ENCODE measurements at regions of chr15 and their contacts with region 1.

Region 1: DNA sequence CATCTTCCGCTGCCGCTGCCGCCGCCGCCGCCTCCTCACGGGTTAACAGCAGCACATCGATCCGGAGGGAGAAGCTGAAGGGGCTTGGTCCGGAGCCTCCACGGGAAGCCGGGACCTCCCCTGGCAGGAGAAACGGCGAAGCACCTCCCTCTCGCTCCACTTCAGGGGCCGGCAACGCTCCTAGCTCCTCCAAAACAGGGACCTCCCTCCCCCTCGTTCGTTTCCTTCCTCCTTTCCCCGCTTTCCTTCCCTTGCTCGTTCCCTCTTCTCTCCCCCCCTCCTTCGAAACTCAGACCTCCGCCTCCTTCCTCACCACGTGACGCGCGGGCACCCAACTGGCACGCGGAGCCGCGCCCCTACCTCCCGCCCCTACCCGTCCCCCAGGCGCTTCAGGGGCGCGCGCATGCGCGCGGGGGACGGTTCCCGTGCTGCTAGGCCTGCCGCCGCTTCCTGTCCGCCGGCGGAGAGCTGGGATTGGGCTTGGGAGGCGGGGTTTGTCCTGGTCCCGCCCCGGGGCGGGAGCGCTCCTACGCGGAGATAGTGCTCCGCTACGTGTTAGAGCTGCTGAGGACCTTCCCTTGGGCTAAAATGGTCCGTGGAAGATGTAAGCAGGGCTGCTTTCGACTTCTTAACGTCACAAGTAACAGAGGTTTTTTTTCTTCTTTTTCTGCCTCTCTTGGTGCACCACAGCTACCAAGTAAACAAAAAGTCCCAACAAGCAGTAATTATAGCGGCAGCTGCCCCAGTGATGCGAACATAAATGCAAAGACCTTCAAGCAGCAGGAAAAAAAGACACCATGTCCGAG is at the start of gene ADAM10:
- DNase-seq: peak; percentile 99
- H3K4me3 Mint-ChIP-seq: peak within 1 kb of the TSS; percentile 92
- H3K27ac Mint-ChIP-seq: peak within 1 kb of the TSS; percentile 92
- H3K4me1 Mint-ChIP-seq: peaks cover 31% of the 10 kb centered on the region
- H3K27me3 Mint-ChIP-seq: no peaks in the 10 kb centered on the region
- total RNA-seq, gene ADAM10: 103 and 111 TPM in 2 replicates

Region 2: DNA sequence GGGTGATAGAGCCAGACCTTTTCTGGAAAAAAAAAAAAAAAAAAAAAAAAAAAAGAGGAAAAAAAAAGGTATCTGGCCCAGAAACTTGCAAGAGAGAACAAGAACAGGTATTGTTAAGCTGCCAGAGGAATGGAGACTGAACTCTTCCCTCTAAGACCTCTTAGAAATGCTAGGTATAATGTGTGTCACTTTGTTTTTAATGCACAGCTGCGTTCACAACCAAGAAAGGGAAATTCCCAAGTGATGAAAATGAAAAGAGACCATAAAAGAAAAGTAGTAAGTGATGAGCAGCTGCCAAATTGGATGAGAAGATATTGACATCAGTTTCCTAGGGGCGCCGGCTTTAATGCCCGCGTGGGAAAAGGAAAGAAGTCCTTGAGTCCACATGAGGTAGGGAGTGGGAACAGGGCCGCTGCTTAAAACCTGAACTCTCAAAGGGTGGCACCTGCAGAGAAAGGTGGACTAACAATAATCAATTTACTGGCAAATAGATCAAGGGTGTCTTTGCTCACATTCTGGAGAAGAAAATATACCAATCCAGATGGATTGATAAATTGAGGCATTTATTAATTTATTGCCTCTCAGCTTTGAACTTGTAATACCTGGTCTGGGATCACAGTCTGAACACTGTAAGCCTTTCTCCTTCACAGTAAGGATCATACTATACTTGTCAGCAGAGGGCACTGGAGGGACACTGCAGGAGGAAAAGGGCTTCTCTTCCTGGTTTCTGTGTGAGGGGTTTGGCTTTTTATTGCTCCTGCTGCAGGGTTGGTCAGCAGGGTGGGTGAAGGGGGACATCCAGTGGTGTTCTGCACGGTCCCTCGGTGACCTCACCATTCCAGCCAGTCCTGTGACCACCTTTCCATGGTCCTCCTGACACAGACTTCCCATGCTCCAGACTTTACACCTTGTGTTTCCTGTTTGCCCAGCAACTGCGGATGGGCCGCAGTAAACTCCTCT is 480.0 kb before region 1 on chr15:
- intact Hi-C with region 1: loop called (anchors 5 kb)
- DNase-seq: peak; percentile 83
- H3K4me3 Mint-ChIP-seq: peak overlapping the region; percentile 15
- H3K27ac Mint-ChIP-seq: peak overlapping the region; percentile 63
- H3K4me1 Mint-ChIP-seq: peaks cover 14% of the 10 kb centered on the region
- H3K27me3 Mint-ChIP-seq: no peaks in the 10 kb centered on the region

Region 3: DNA sequence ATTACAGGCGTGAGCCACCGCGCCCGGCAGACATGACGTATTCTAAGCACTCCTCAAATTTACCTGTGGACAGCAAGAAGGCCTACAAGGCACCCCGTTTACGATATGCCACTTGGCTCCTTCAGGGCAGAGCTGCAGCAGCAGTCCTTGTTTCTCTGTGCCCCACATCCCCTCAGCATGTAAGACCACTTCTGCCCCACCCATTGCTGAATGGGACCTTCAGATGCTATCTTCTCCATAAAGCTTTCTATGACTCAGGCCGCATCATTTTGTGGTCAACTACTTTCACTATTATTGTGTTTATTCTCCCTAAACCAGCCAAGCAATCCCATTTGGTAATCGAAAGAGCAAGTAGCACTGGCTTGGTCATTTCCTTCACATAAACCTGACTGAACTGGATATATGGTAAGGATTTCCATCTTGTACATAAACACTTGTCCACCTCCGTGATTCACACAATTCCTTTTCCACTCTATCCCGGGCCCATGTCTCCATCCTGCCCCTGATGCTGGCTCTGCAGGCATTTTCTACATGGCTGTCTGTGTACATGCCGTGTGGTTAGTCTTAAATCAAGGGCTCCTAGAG is 292.3 kb before region 1 on chr15:
- intact Hi-C with region 1: loop called (anchors 5 kb)
- DNase-seq: peak; percentile 82
- H3K4me3 Mint-ChIP-seq: peak overlapping the region; percentile 50
- H3K27ac Mint-ChIP-seq: peak overlapping the region; percentile 84
- H3K4me1 Mint-ChIP-seq: peaks cover 83% of the 10 kb centered on the region
- H3K27me3 Mint-ChIP-seq: no peaks in the 10 kb centered on the region

Region 4: DNA sequence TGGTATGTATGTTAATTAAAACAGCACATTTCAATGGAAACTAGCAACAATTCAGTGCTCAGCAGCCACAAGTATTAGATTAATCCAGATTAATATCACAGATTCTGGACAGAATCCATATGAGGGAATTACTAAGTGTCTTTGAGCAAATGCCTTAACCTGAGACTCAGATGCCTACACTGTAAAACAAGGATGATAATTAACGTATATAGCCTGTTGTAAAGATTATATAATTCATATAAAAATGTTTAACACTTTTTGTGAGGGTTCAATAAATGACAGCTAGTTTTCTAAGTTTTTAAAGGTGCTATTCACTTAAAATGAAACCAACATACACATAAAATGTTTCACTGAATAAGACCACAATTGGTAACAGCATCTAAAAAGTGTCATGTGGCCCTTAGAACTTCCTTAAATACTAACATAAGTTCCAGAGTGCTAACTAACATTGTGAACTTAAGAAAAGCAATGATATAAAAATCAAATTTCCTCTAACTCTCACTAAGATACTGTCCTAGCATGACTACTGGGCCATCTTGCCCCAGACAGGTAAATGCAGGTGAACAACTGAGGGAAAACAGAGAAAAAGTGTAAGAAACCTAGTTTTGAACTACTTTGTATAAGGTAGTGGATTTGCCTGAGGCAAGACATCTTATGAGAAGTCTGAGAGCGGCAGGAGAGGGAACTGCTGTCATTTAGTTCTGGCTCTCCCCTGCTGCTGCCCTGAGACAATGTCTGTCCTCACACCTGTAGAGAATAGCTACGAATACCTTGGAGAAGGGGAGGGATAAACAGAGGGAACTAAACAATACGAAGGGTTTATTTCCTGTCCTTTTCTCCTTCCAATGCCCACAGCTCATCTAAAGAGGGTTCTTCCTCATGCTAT is 151.5 kb before region 1 on chr15:
- intact Hi-C with region 1: loop called (anchors 2 kb)
- DNase-seq: no peak
- H3K4me3 Mint-ChIP-seq: no peak overlapping the region
- H3K27ac Mint-ChIP-seq: no peak overlapping the region
- H3K4me1 Mint-ChIP-seq: peaks cover 27% of the 10 kb centered on the region
- H3K27me3 Mint-ChIP-seq: no peaks in the 10 kb centered on the region

Region 5: DNA sequence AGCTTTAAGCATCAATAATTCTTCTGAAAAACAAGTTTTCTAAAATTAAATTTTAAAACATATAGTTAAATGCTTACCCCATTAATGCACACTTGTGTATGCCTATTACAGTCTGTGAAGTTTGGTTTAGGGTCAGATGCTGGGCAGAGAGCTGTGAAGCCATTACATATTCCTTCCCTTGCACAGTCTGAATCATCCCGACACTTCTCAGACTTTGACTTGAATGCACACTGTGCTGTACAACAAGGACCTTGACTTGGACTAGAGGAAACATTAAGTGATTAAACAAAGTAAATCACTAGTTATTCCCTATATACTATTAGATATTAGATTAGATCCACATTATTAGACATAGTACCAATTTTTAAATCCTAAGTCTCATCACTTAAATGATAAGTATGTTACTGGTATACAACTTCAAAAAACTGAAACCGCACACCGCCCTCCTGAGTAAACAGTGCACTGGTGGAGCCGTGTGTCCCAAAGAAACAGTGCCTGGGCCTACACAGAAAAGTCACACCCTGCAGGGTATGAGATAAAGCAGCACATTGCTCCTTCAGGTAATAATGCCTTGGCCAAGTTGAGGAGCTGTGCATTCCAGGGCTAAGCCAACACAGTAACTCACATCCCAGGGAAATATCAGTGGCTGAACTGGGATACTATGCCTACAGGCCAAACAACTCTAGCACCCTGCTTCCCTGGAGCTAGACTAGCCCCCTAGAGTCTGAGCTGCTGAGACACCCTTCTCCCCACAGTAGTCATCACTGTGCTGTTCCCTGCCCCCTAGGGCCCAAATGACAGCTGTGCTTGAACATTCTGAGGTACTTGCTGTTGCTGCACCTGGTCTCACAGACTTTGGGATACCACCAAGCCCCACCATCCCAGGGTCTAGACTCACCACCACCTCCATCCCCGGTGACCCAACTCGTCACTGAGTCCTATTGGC is 137.7 kb before region 1 on chr15:
- intact Hi-C with region 1: no loop called
- DNase-seq: no peak
- H3K4me3 Mint-ChIP-seq: no peak overlapping the region
- H3K27ac Mint-ChIP-seq: no peak overlapping the region
- H3K4me1 Mint-ChIP-seq: peaks cover 20% of the 10 kb centered on the region
- H3K27me3 Mint-ChIP-seq: no peaks in the 10 kb centered on the region

Region 6: DNA sequence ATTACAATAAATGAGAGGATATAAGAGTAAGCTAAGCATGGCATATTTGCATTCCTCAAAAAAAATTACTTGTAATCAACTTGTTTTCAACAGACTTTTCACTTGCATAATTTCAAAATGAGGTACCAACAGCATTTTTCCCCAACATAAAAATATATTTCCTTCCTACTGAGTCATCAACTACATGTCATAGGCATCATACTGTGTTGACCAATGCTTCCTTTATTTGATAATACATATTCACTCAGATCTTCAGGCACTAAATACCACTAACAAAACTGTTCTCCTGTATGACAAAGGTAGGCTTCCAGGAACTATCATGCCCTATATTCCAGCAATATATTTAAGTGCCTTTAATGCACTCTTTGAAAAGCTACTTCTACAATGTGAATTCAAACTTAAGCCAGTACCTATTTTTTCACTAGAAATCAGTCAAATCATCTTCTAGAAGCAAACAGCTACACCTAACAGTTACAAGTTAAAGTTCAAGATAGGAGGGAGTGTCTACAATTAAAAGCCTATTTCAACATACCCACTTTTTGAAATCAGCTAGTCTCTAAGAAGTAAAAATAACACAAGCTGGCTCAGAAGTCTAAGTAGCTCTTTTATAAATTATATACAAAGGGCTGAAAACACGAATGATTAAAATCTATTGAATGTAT is 11.6 kb before region 1 on chr15:
- intact Hi-C with region 1: loop called (anchors 1 kb)
- DNase-seq: no peak
- H3K4me3 Mint-ChIP-seq: peak overlapping the region; percentile 22
- H3K27ac Mint-ChIP-seq: peak overlapping the region; percentile 81
- H3K4me1 Mint-ChIP-seq: peaks cover 54% of the 10 kb centered on the region
- H3K27me3 Mint-ChIP-seq: no peaks in the 10 kb centered on the region

Region 7: DNA sequence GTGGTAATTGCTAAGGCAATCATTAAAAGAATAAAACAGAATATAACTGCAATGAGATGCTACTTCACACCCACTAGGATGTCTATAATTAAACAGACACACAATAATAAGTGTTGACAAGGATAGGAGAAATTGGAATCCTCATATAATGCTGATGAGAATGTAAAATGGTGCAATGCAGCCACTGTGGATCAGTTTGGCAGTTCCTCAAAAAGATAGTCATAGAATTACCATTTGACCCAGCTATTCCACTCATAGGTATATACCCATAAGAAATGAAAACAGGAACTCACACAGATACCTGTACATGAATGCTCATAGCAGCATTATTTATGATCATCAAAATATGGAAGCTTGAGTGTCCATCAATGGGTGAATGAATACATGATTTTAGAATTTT is 228.2 kb after region 1 on chr15:
- intact Hi-C with region 1: no loop called
- DNase-seq: no peak
- H3K4me3 Mint-ChIP-seq: no peak overlapping the region
- H3K27ac Mint-ChIP-seq: no peak overlapping the region
- H3K4me1 Mint-ChIP-seq: peaks cover 36% of the 10 kb centered on the region
- H3K27me3 Mint-ChIP-seq: peaks cover 10% of the 10 kb centered on the region

Region 8: DNA sequence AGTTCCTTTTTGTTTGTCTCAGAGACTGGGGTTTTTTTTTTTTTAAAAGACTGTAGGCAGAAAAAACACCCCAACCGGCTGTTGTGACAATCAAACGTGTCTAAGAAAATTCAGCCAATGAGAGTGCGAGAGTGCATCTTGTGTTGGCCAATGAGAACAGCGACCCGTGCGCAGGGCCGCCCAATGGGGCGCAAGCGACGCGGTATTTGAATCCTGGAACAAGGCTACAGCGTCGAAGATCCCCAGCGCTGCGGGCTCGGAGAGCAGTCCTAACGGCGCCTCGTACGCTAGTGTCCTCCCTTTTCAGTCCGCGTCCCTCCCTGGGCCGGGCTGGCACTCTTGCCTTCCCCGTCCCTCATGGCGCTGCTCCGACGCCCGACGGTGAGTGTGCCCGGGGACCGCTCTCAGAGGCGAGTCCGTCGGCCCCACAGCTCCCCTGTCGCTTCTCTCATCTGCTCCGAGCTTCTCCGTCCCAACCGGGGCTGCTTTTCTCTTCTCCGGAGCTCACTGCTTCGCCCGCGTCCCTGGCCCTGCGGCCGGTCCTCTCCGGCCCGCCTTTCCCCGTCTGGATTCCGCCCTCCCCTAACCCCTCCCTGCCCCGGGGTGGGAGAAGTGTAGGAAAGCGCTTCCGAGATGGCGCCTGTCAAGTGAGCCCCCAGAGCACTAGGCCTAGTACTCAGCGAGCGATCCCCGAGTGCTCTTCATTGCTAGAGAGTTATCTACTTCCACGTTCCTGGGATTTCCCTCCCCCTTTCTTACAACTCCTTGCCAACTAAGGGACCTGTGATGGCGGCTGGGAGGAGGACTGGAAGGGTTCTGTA is 355.4 kb after region 1 on chr15 and contains the start of gene CCNB2:
- intact Hi-C with region 1: loop called (anchors 10 kb)
- DNase-seq: peak; percentile 96
- H3K4me3 Mint-ChIP-seq: peak within 1 kb of the TSS; percentile 85
- H3K27ac Mint-ChIP-seq: peak within 1 kb of the TSS; percentile 98
- H3K4me1 Mint-ChIP-seq: peaks cover 28% of the 10 kb centered on the region
- H3K27me3 Mint-ChIP-seq: no peaks in the 10 kb centered on the region
- total RNA-seq, gene CCNB2: 38.6 and 39.2 TPM in 2 replicates

Measured in activated CD4-positive, alpha-beta T cell treated with anti-CD3 and anti-CD28 coated beads, Interleukin-2, amount 10 ng/mL, durations not matched to agents 24 days and 14 days (primary cell).